PC-3 (cell line): ENCODE measurements at regions of chr1 and their contacts with region 1.

Region 1: DNA sequence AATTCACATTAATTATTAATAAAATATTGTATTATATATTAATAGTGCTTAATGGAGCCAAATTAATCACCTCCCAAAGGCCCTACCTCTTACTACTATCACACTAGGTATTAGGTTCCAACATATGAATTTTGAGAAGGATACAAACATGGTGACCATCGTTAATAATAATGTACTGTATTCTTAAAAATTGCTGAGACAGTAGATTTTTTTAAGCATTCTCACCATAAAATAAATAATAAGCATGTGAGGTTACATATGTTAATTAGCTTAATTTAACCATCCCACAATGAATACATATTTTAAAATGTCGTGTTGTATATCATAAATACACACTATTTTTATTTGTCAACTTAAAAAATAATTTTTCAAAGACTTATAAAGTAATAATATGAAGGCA is 299.2 kb upstream of the NR5A2 start:
- DNase-seq: no peak
- ATAC-seq: no peak
- H3K4me3 ChIP-seq: no peak overlapping the region
- H3K27ac ChIP-seq: no peak overlapping the region
- H3K4me1 ChIP-seq: peaks cover 2% of the 10 kb centered on the region; the same call in 1 of the 2 replicates
- H3K27me3 ChIP-seq: no peaks in the 10 kb centered on the region
- CTCF ChIP-seq: no peak

Region 2: DNA sequence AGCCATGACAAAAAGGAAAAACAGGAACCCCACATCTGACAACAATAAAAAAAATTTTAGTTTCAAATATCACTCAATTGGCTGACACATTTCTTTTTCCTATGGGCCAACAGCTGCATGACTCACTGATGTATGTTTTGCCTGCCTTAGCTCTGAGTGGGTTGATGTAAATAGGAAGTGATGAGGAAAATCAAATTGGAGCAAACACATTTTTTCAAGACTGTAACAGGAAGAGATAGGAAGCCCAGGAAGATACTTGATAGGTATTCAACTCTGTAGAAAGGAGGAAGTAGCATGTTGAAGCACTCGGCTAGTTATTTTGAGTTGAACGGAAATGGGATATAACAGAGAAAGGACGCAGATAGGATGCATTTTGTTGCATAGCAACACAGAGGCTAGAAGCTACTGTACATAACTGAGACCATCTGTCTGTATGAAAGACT is 131.2 kb after region 1 on chr1:
- CTCF ChIA-PET with region 1: no interaction called
- POLR2A ChIA-PET with region 1: interaction called, 10 read pairs
- intact Hi-C with region 1: no loop called
- DNase-seq: peak; percentile 98
- ATAC-seq: peak; percentile 97
- H3K4me3 ChIP-seq: no peak overlapping the region
- H3K27ac ChIP-seq: peak overlapping the region; percentile 3
- H3K4me1 ChIP-seq: peaks cover 24% of the 10 kb centered on the region
- H3K27me3 ChIP-seq: peaks cover 3% of the 10 kb centered on the region; the same call in 1 of the 2 replicates
- CTCF ChIP-seq: no peak